Aorta (tissue), 5 donors: ENCODE measurements at regions of chr3 and their contacts with region 1.

Region 1: DNA sequence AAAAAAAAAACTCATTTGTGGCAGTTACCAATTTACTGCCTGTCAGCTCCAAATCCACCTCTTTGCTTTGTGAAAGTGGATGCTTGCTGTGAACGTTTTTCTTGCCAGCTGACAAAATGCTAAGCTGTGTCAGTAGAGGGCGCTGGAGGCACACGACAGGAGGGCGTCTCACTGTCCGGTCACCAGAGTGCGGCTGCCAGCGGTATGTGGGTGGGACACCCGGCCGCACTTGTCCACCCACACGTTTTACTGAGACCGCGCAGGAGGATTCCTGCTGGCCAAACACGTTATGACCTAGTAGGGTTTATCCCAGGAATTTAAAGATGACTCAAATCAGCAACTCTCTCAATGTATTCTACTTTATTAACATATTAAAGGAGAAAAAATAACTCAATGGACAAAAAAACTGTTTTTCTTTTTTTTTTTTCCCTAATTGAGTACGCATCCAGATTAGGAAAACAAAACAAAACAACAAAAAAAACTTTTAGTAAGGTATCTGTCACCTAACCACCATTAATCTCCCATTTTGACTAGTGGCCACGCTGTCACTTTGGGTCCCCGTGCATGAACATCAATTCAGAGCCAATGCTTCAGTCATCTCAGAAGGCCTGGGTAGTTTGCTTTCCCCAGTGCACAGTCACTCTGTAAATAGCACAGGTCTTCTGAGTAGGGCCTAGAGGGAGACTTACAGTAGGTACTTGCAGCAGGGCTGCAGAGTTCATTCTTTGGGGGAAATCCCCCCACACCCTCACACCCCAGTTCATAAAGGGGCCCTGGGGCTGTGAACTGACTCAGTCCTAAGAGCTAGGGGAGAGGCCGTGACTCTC is 43.8 kb upstream of the RPL35A start:
- DNase-seq: peak; percentile 93 to 95
- ATAC-seq: peak; percentile 96
- H3K4me3 ChIP-seq: no peak overlapping the region
- H3K27ac ChIP-seq: no peak overlapping the region
- H3K4me1 ChIP-seq: no peaks in the 10 kb centered on the region
- H3K27me3 ChIP-seq: no peaks in the 10 kb centered on the region

Region 2: DNA sequence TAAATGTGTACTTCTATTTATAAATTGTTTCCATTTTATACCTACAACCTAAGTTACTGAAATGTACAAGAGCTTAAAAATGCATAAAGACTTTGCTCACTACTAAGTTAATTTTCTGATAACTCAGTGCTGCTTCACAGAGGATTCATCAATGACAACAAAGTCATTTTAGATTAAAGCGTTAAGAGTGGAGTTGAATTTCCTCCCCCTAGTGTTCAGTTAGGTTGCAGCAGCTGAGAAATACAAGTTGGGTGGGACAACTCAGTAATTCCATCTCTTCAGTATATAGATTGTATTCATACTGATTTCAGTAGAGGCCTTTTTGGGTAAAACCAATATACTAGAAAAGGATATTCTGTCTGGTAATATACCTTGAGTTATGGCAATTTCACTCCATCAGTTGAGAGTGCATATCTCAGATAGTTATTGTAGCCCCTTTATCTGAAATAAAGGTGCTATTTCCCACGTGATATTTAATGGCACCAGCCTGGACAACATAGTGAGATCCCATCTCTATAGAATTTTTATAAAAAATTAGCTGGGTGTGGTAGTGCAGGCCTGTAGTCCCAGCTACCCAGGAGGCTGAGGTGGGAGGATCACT is 36.8 kb after region 1 on chr3:
- intact Hi-C with region 1: loop called (anchors 2 to 5 kb)
- DNase-seq: no peak
- ATAC-seq: no peak
- H3K4me3 ChIP-seq: no peak overlapping the region
- H3K27ac ChIP-seq: no peak overlapping the region
- H3K4me1 ChIP-seq: no peaks in the 10 kb centered on the region
- H3K27me3 ChIP-seq: no peaks in the 10 kb centered on the region

Region 3: GRCh38 chr3:197997936-197998335 is 91.7 kb after region 1 on chr3:
- intact Hi-C with region 1: no loop called
- DNase-seq: no peak
- ATAC-seq: no peak
- H3K4me3 ChIP-seq: no peak overlapping the region
- H3K27ac ChIP-seq: no peak overlapping the region
- H3K4me1 ChIP-seq: no peaks in the 10 kb centered on the region
- H3K27me3 ChIP-seq: no peaks in the 10 kb centered on the region